ENCODE measurements at regions of chr19 and their contacts with region 1.

Region 1: DNA sequence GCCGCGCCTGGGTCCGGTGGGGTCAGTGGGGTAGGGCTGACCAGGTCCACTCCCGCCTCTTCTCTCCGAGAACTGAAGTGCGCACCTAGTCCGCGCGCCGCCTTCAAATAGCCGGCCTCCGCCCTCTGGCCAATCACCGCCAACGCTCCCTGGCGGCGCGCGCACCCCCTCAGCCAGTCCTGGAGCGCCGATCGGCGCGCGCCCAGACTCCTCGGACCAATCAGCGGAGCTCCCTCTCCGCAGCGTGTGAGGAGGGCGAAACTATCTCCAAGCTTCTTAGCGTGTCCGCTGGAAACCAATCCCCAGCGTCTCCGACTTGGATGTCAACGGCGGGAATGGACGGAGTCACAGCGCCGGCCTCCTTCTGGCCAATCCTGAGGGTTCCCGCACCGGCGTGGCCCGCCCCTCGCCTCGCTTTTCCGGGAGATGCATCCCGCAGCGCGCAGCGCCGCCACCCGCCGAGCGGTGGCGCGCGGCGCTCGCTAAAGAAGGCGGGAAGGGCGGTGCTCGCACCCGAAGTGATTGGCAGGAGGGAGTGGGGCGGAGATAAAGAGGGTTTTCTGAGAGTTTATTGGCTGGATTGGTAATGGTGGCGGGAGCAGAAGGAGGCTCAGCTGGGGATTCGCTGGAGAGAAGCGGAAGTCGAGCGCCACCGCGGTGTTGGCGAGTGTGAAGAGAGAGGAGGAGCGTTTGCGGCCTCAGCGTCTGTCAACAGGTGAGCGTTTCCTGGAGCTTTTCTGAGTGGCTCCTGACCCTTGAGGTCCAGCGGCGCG is at the start of gene ASF1B:
- H3K4me3 ChIP-seq: peak within 1 kb of the TSS; percentile 90
- H3K27ac ChIP-seq: peak within 1 kb of the TSS; percentile 85
- H3K4me1 ChIP-seq: no peaks in the 10 kb centered on the region
- CTCF ChIP-seq: peak; percentile 99

Region 2: GRCh38 chr19:14073261-14073924 is 63.3 kb before region 1 on chr19:
- CTCF ChIA-PET with region 1: interaction called, 5 read pairs
- POLR2A ChIA-PET with region 1: interaction called, 11 read pairs
- H3K4me3 ChIP-seq: peak overlapping the region; percentile 57
- H3K27ac ChIP-seq: peak overlapping the region; percentile 44; the same call in 1 of the 2 replicates
- H3K4me1 ChIP-seq: no peaks in the 10 kb centered on the region
- CTCF ChIP-seq: 0 out of 2 replicates have a peak, but pooled peaks have one; percentile 10

Region 3: DNA sequence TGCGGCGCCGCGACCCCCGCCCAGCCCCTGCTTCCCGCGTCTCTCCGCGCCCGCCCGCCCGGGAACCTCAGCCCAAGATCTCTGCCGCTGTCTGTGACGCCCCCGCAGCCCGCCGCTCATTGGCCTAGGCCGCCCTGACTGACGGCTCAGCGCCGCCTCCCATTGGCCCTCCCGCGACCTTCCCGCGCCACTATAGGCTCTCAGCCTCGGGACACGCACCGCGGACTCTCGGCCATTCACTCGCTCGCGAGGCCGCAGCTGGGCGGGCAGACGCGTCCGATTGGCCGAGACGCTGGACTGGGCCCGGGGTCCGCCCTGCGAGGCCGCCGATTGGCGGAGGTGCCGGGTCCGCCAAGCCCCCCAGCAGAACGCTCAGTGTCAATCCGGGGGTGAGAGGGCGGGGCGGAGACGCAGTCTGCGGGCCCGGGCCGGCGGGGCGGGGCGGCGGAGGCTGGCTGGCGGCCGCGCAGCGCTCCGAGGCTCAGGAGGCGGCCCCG is 19.0 kb before region 1 on chr19 and contains the start of gene PRKACA:
- CTCF ChIA-PET with region 1: interaction called, 26 read pairs
- POLR2A ChIA-PET with region 1: interaction called, 64 read pairs
- H3K4me3 ChIP-seq: peak within 1 kb of the TSS; percentile 76
- H3K27ac ChIP-seq: peak within 1 kb of the TSS; percentile 47; the same call in 1 of the 2 replicates
- H3K4me1 ChIP-seq: peaks cover 9% of the 10 kb centered on the region
- CTCF ChIP-seq: no peak

Region 4: GRCh38 chr19:14405758-14406644 is 269.3 kb after region 1 on chr19:
- CTCF ChIA-PET with region 1: interaction called, 9 read pairs
- POLR2A ChIA-PET with region 1: interaction called, 17 read pairs
- H3K4me3 ChIP-seq: no peak overlapping the region
- H3K27ac ChIP-seq: peak overlapping the region; percentile 50; the same call in 1 of the 2 replicates
- H3K4me1 ChIP-seq: no peaks in the 10 kb centered on the region
- CTCF ChIP-seq: peak; percentile 95

Region 5: GRCh38 chr19:14496028-14496833 is 359.5 kb after region 1 on chr19 and contains the start of gene GIPC1:
- CTCF ChIA-PET with region 1: no interaction called
- POLR2A ChIA-PET with region 1: interaction called, 10 read pairs
- H3K4me3 ChIP-seq: peak within 1 kb of the TSS; percentile 69
- H3K27ac ChIP-seq: peak within 1 kb of the TSS; percentile 60; the same call in 1 of the 2 replicates
- H3K4me1 ChIP-seq: no peaks in the 10 kb centered on the region
- CTCF ChIP-seq: no peak